Activated CD4-positive, alpha-beta T cell treated with anti-CD3 and anti-CD28 coated beads for 36 hours (primary cell): ENCODE measurements at regions of chr19 and their contacts with region 1.

Region 1: GRCh38 chr19:18636183-18636968 is 452 bp upstream of the KLHL26 start:
- DNase-seq: peak; percentile 100
- ATAC-seq: peak; percentile 92
- H3K4me3 Mint-ChIP-seq: peak overlapping the region; percentile 84
- H3K27ac Mint-ChIP-seq: peak overlapping the region; percentile 78
- H3K4me1 Mint-ChIP-seq: peaks cover 24% of the 10 kb centered on the region
- H3K27me3 Mint-ChIP-seq: no peaks in the 10 kb centered on the region

Region 2: DNA sequence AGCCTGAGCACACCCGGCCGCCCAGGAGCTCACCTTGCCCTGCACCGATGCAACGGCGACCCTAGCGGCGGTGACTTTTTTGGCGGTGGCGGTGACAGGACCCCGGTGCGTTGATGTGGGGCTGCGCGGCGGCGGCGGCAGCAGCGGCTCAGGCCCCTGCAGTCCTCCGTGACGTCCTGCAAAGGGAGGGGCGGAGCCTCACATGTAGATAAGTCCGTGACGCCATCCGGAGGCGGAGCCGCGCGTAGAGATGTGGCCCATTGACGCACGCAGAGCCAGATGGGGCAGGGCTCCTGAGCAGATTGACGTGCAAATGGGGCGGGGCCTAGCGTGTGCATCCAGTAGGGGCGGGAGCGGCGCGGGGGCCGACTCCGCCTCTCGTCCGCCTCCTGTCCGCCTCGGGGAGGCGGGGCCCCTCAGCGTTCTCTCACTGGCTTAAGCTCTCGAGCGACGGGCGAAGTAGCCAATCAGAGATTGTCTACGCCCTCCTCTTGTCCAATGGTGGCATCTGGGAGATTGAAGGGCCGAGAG is 432.4 kb before region 1 on chr19 and contains the start of gene RAB3A:
- CTCF ChIA-PET with region 1: no interaction called
- POLR2A ChIA-PET with region 1: no interaction called
- intact Hi-C with region 1: loop called in 1 of 2 experiments (anchors 1 kb)
- DNase-seq: peak; percentile 100
- ATAC-seq: peak; percentile 94
- H3K4me3 Mint-ChIP-seq: peak within 1 kb of the TSS; percentile 96
- H3K27ac Mint-ChIP-seq: peak within 1 kb of the TSS; percentile 90
- H3K4me1 Mint-ChIP-seq: peaks cover 18% of the 10 kb centered on the region
- H3K27me3 Mint-ChIP-seq: no peaks in the 10 kb centered on the region
- total RNA-seq, gene RAB3A: 5.6 to 8.9 TPM

Region 3: GRCh38 chr19:18571564-18572300 is 64.6 kb before region 1 on chr19 and contains the start of gene UBA52:
- CTCF ChIA-PET with region 1: no interaction called
- POLR2A ChIA-PET with region 1: no interaction called
- intact Hi-C with region 1: loop called (anchors 1 kb)
- DNase-seq: peak; percentile 100
- ATAC-seq: peak; percentile 94
- H3K4me3 Mint-ChIP-seq: peak within 1 kb of the TSS; percentile 89
- H3K27ac Mint-ChIP-seq: peak within 1 kb of the TSS; percentile 95
- H3K4me1 Mint-ChIP-seq: peaks cover 27% of the 10 kb centered on the region
- H3K27me3 Mint-ChIP-seq: no peaks in the 10 kb centered on the region
- total RNA-seq, gene UBA52: 1,703 to 2,296 TPM

Region 4: GRCh38 chr19:18700501-18701249 is 64.3 kb after region 1 on chr19:
- CTCF ChIA-PET with region 1: no interaction called
- POLR2A ChIA-PET with region 1: no interaction called
- intact Hi-C with region 1: loop called in 1 of 2 experiments (anchors 2 kb)
- DNase-seq: peak; percentile 84
- ATAC-seq: peak; percentile 94
- H3K4me3 Mint-ChIP-seq: peak overlapping the region; percentile 64
- H3K27ac Mint-ChIP-seq: no peak overlapping the region
- H3K4me1 Mint-ChIP-seq: peaks cover 31% of the 10 kb centered on the region
- H3K27me3 Mint-ChIP-seq: no peaks in the 10 kb centered on the region

Region 5: DNA sequence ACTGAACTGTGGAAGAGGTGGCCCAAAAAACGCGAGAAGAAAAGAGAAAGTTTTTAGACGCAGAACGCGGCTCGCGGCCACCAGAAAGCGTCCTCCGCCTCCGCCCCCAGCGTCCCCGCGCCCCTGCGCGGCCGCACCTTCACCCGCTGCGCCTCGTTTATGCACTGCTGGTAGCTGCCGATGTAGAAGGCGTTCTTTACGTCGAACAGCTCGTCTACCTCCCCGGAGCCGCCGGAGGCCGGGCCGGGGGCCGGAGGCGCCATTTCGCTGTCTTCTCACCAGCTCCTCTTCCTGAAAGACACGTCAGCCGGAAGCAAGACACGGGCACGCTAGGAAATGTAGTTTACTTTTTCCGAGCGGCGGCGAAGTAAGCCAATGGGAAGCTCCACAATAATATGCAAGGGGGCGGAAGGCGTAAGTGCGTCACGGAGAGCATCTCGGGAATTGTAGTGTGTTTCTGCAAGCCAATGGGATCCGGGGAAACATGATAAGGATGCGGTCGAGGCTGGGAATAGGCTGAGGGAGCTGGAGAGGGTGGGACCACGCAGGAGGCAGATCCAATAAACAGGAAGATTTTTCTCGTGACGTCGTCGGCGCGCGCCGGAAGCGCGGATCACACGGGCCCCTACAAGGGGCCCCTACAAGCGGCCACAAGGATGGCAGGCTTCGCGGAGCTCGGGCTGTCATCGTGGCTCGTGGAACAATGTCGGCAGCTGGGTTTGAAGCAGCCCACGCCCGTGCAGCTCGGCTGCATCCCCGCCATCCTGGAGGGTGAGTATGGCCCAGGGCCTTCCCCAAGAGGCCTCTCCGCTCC is 282.9 kb after region 1 on chr19 and contains the starts of genes COPE and DDX49:
- CTCF ChIA-PET with region 1: no interaction called
- POLR2A ChIA-PET with region 1: no interaction called
- intact Hi-C with region 1: loop called (anchors 1 kb)
- DNase-seq: peak; percentile 98
- ATAC-seq: peak; percentile 98
- H3K4me3 Mint-ChIP-seq: peak within 1 kb of the TSS; percentile 99
- H3K27ac Mint-ChIP-seq: peak within 1 kb of the TSS; percentile 96
- H3K4me1 Mint-ChIP-seq: peaks cover 41% of the 10 kb centered on the region
- H3K27me3 Mint-ChIP-seq: no peaks in the 10 kb centered on the region
- total RNA-seq, gene COPE: 158 to 182 TPM
- total RNA-seq, gene DDX49: 51.4 to 53.4 TPM

Region 6: GRCh38 chr19:19138169-19138981 is 502.0 kb after region 1 on chr19 and contains the start of gene TMEM161A:
- CTCF ChIA-PET with region 1: no interaction called
- POLR2A ChIA-PET with region 1: no interaction called
- intact Hi-C with region 1: loop called in 1 of 2 experiments (anchors 2 kb)
- DNase-seq: peak; percentile 98
- ATAC-seq: peak; percentile 100
- H3K4me3 Mint-ChIP-seq: peak within 1 kb of the TSS; percentile 93
- H3K27ac Mint-ChIP-seq: peak within 1 kb of the TSS; percentile 95
- H3K4me1 Mint-ChIP-seq: peaks cover 30% of the 10 kb centered on the region
- H3K27me3 Mint-ChIP-seq: no peaks in the 10 kb centered on the region
- total RNA-seq, gene TMEM161A: 26.8 to 31.9 TPM